Sciatic nerve (tissue), 2 donors: ENCODE measurements at regions of chr11 and their contacts with region 1.

Region 1: DNA sequence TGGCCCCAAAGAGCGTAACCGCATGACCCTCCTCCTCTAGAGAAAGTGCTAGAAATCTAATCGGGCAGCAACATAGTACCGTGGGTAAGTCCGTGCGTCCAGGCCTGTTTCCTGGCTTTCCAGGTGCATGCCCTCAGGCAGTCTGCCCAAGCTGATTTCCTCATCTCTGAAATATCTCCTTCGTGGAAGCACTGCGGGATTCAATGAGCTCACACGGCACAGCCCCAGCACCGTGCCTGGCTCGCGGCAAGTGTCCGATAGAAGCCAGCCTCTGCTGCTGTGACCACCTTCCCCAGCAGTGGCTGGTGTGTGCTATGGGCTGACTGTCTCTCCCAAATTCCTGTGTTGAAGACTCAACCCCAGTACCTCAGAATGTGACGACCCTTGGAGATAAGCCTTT is 20.7 kb downstream of the RPUSD4 start:
- DNase-seq: no peak
- ATAC-seq: no peak

Region 2: GRCh38 chr11:125925247-125925740 is 265.5 kb before region 1 on chr11:
- intact Hi-C with region 1: loop called (anchors 2 kb)
- DNase-seq: no peak
- ATAC-seq: no peak